CD8-positive, alpha-beta T cell (primary cell): ENCODE measurements at regions of chr2 and their contacts with region 1.

Region 1: DNA sequence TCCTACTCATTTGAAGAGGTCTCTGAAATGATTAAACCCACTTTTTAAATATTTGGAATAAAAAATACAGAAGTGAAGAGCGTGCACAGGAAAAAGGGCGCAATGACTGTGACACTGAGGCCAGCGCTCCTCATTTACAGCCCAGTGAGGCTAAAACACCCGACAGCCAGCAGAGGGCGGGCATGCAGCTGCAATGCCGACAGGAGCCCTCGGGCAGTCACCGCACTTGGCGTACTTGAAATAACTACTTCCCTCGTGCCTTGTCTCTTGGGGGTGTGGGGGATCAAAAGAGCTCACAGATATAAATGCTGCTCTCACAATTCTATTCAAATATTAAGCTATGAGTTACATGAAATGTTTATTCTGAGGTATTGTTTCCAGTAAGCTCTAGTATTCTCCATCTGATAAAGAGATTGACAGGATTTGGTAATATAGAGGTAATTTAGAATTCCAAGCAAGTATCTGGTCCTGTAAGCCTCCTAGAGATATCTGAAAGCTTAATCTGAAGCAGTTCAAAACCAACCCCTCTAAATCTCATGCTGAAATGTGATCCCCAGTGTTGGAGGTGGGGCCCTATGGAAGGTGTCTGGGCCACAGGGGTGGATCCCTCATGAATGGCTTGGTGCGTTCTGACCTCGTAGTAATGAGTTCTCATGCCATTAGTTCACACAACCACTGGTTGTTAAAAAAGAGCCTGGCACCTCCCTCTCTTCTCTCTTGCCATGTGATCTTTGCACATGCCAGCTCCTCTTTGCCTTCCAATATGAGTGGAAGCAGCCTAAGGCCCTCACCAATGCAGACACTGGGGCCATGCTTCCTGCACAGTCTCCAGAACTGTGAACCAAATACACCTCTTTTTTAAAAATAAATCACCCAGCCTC is 93.6 kb downstream of the ZAP70 start:
- DNase-seq: peak; percentile 56 to 84 (median 77)
- ATAC-seq: peak; percentile 95
- H3K4me3 ChIP-seq: no peak overlapping the region
- H3K4me3 Mint-ChIP-seq: no peak overlapping the region
- H3K27ac ChIP-seq: no peak overlapping the region
- H3K27ac Mint-ChIP-seq: no peak overlapping the region
- H3K4me1 ChIP-seq: no peaks in the 10 kb centered on the region
- H3K4me1 Mint-ChIP-seq: no peaks in the 10 kb centered on the region
- H3K27me3 ChIP-seq: no peaks in the 10 kb centered on the region
- H3K27me3 Mint-ChIP-seq: no peaks in the 10 kb centered on the region
- CTCF ChIP-seq: peak; percentile 95

Region 2: DNA sequence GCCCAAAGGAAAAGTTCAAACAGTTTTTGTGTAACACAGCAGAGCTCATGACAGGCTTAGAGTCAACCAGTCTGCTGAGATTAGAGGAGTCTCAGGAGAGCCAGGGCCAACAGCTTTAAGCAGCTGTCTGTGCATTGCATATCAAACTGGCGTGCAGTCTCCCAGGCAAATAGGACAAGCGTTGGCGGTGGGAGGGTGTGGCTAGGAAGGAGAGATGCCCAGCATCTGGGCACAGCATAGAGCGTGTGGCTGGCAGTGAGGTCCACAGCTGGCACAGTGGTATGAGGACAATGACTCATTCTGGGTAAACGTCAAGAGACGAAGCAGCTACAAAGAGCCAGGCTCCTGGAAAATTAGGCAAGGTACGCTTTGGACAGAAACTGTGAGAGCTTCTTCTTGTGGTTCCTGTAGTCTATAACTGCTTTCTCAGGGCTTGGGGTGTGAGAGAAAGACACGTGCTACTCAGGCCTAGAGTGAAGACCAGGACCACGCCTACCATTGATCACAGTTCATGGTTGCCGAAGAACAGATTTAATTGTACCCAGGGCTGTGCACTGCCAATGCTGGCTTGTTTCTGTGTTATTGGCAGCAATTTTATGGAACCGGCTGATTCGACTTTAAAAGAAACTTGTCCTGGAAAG is 78.8 kb before region 1 on chr2:
- CTCF ChIA-PET with region 1: no interaction called
- POLR2A ChIA-PET with region 1: no interaction called
- intact Hi-C with region 1: no loop called
- DNase-seq: peak in 5 of 9 experiments; percentile 38 to 63 (median 54)
- ATAC-seq: peak; percentile 76
- H3K4me3 ChIP-seq: no peak overlapping the region
- H3K4me3 Mint-ChIP-seq: no peak overlapping the region
- H3K27ac ChIP-seq: peak overlapping the region; percentile 13 to 32
- H3K27ac Mint-ChIP-seq: peak overlapping the region; percentile 90
- H3K4me1 ChIP-seq: peaks cover 66% of the 10 kb centered on the region
- H3K4me1 Mint-ChIP-seq: peaks cover 77% of the 10 kb centered on the region
- H3K27me3 ChIP-seq: no peaks in the 10 kb centered on the region
- H3K27me3 Mint-ChIP-seq: no peaks in the 10 kb centered on the region
- CTCF ChIP-seq: no peak

Region 3: DNA sequence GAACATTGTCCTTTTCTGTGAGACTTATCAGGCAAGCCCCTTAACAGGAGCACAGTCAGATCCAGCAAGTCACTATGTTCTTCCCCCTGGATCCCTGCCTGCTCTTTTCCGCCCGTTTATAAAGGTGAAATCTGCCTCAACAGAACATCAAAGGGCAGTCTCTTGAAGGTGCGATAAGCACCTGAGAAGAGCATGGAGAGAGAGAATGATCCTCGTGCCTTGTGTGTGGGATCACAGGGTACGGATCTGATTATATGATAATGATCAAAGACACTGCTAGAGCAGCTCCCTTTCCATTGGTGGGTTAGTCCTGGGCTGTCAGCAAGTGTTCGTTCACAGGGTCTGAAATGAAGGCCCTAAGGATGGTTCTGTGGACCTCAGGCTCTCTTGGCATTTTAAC is 12.8 kb after region 1 on chr2:
- CTCF ChIA-PET with region 1: interaction called, 23 read pairs
- POLR2A ChIA-PET with region 1: no interaction called
- intact Hi-C with region 1: no loop called
- DNase-seq: no peak
- ATAC-seq: no peak
- H3K4me3 ChIP-seq: no peak overlapping the region
- H3K4me3 Mint-ChIP-seq: no peak overlapping the region
- H3K27ac ChIP-seq: no peak overlapping the region
- H3K27ac Mint-ChIP-seq: no peak overlapping the region
- H3K4me1 ChIP-seq: no peaks in the 10 kb centered on the region
- H3K4me1 Mint-ChIP-seq: no peaks in the 10 kb centered on the region
- H3K27me3 ChIP-seq: no peaks in the 10 kb centered on the region
- H3K27me3 Mint-ChIP-seq: no peaks in the 10 kb centered on the region
- CTCF ChIP-seq: no peak

Region 4: DNA sequence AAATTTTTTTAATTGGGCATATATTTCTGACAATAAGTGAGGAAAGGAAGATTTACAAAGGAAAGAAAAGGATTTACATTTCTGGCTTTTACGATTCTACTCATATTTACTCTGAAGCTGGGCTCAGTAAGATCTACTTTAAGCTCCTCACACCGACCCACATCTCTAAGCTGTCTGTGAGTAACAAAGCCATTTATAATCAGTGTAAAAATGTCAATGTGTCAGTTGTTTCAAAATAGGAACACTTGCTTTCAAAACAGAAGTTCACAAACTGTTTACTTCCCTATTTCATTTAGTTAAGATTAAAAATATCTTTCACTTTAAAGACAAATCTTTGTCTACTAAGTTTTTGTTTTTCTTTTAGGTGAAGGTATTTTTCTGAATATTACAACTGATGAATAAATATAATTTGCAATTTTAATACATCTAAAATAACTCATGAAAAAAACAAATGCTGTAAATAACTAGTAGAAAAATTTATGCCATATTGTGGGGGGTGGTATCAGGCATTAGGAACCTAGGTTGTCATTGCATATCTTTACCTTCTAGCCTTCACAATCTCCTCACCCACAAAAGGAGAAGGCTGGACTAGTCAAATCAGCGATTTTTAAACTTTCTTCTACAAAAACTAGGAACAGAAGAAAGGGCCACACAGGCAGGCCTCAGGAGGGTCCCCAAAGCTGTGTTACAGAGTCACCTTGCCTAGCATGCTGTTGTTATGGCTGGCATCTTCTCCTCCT is 124.3 kb after region 1 on chr2:
- CTCF ChIA-PET with region 1: no interaction called
- POLR2A ChIA-PET with region 1: no interaction called
- intact Hi-C with region 1: no loop called
- DNase-seq: no peak
- ATAC-seq: no peak
- H3K4me3 ChIP-seq: no peak overlapping the region
- H3K4me3 Mint-ChIP-seq: no peak overlapping the region
- H3K27ac ChIP-seq: no peak overlapping the region
- H3K27ac Mint-ChIP-seq: no peak overlapping the region
- H3K4me1 ChIP-seq: peaks cover 12% of the 10 kb centered on the region
- H3K4me1 Mint-ChIP-seq: peaks cover 66% of the 10 kb centered on the region
- H3K27me3 ChIP-seq: no peaks in the 10 kb centered on the region
- H3K27me3 Mint-ChIP-seq: no peaks in the 10 kb centered on the region
- CTCF ChIP-seq: no peak

Region 5: DNA sequence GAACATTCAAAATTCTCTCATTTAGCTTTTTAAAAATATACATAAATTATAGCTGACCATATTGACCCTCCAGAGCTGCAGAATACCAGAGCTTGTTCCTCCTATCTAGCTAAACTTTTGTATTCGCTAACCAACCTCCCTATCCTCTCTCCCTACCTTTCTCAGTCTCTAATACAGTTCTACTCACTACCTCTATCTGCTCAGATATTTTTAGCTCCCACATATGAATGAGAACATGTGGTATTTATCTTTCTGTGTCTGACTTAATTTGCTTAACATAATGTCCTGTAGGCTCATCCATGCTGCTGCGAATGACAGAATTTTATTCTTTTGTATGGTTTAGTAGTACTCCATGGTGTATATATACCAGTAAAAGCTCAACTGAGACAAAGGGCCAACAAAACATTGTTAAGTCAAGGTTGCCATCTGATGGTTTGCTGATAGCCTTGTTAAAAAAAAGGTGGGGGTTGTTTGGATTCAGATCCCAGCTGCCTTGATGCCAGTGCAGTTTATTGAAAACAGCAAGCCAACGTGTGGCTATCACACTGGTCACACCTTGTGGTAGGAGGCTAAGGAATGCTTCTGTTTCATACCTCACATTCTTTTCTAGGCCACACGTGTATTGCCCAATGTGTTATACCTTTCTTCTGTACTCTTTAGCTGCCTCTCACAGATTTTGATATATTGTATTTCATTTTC is 381.5 kb after region 1 on chr2:
- CTCF ChIA-PET with region 1: interaction called, 4 read pairs
- POLR2A ChIA-PET with region 1: no interaction called
- intact Hi-C with region 1: loop called (anchors 1 to 5 kb)
- DNase-seq: peak in 1 of 9 experiments; percentile 18
- ATAC-seq: no peak
- H3K4me3 ChIP-seq: no peak overlapping the region
- H3K4me3 Mint-ChIP-seq: no peak overlapping the region
- H3K27ac ChIP-seq: no peak overlapping the region
- H3K27ac Mint-ChIP-seq: no peak overlapping the region
- H3K4me1 ChIP-seq: no peaks in the 10 kb centered on the region
- H3K4me1 Mint-ChIP-seq: no peaks in the 10 kb centered on the region
- H3K27me3 ChIP-seq: no peaks in the 10 kb centered on the region
- H3K27me3 Mint-ChIP-seq: peaks cover 2% of the 10 kb centered on the region
- CTCF ChIP-seq: no peak

Region 6: GRCh38 chr2:98212092-98212797 is 405.3 kb after region 1 on chr2:
- CTCF ChIA-PET with region 1: no interaction called
- POLR2A ChIA-PET with region 1: no interaction called
- intact Hi-C with region 1: no loop called
- DNase-seq: no peak
- ATAC-seq: no peak
- H3K4me3 ChIP-seq: no peak overlapping the region
- H3K4me3 Mint-ChIP-seq: no peak overlapping the region
- H3K27ac ChIP-seq: no peak overlapping the region
- H3K27ac Mint-ChIP-seq: no peak overlapping the region
- H3K4me1 ChIP-seq: no peaks in the 10 kb centered on the region
- H3K4me1 Mint-ChIP-seq: no peaks in the 10 kb centered on the region
- H3K27me3 ChIP-seq: no peaks in the 10 kb centered on the region
- H3K27me3 Mint-ChIP-seq: peaks cover 52% of the 10 kb centered on the region
- CTCF ChIP-seq: no peak

Region 7: DNA sequence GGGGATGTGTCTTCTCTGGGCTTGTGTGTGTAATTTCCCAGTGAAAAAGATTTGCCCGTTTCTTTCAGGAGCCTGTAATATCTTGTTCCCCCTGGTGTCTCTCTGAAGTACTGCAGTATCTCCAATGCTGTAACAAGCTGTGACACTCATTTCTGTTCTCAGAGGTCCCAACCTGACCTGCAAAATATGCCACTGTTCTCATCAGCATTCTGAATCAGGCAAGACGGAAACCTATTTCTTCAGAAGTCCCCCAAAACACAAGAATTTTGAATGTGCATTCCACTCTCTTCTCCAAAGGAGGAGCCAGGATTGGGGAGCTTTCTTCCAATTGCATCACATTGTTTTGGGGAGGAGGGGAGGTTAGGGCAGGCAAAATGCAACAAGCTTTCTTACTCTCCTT is 462.3 kb after region 1 on chr2:
- CTCF ChIA-PET with region 1: interaction called, 6 read pairs
- POLR2A ChIA-PET with region 1: no interaction called
- intact Hi-C with region 1: loop called in 1 of 2 experiments (anchors 2 kb)
- DNase-seq: peak in 2 of 9 experiments; percentile 23 to 38
- ATAC-seq: no peak
- H3K4me3 ChIP-seq: no peak overlapping the region
- H3K4me3 Mint-ChIP-seq: no peak overlapping the region
- H3K27ac ChIP-seq: no peak overlapping the region
- H3K27ac Mint-ChIP-seq: no peak overlapping the region
- H3K4me1 ChIP-seq: no peaks in the 10 kb centered on the region
- H3K4me1 Mint-ChIP-seq: no peaks in the 10 kb centered on the region
- H3K27me3 ChIP-seq: no peaks in the 10 kb centered on the region
- H3K27me3 Mint-ChIP-seq: peaks cover 9% of the 10 kb centered on the region
- CTCF ChIP-seq: no peak

Region 8: GRCh38 chr2:98378930-98379671 is 572.1 kb after region 1 on chr2:
- CTCF ChIA-PET with region 1: interaction called, 61 read pairs
- POLR2A ChIA-PET with region 1: no interaction called
- intact Hi-C with region 1: no loop called
- DNase-seq: peak in 1 of 9 experiments; percentile 17
- ATAC-seq: no peak
- H3K4me3 ChIP-seq: no peak overlapping the region
- H3K4me3 Mint-ChIP-seq: no peak overlapping the region
- H3K27ac ChIP-seq: no peak overlapping the region
- H3K27ac Mint-ChIP-seq: no peak overlapping the region
- H3K4me1 ChIP-seq: no peaks in the 10 kb centered on the region
- H3K4me1 Mint-ChIP-seq: no peaks in the 10 kb centered on the region
- H3K27me3 ChIP-seq: no peaks in the 10 kb centered on the region
- H3K27me3 Mint-ChIP-seq: peaks cover 13% of the 10 kb centered on the region
- CTCF ChIP-seq: no peak

Region 9: DNA sequence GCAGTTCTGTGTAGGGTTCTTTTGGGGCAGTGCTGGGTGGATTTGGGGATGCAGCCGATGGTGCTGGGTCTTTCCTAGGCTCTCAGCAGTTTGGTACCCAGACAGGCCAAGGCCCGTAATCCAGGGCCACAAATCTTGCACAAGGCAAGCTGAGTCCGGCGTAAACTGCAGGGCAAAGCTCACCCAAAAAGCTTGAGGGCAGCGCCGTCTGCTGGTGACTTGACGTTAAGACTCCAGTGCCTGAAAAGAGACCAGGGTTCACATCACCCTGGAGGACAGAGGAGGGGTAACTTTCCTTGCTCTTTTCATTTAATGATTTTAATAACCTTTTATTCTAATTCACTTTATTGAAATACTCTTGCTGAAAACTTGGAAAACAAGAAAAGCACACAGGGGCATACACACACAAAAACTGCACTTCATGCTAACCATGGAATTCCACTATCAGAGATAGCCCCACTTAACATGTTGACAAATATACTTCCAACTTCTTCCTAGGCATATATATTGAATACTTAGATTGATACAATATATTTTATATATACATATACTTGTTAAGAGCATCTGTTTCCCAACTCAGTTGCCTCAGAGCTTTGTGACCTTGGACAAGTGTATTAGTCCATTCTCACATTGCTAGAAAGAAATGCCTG is 578.2 kb after region 1 on chr2:
- CTCF ChIA-PET with region 1: interaction called, 61 read pairs
- POLR2A ChIA-PET with region 1: no interaction called
- intact Hi-C with region 1: loop called in 1 of 2 experiments (anchors 1 kb)
- DNase-seq: peak; percentile 50 to 78 (median 70)
- ATAC-seq: peak; percentile 78
- H3K4me3 ChIP-seq: no peak overlapping the region
- H3K4me3 Mint-ChIP-seq: no peak overlapping the region
- H3K27ac ChIP-seq: no peak overlapping the region
- H3K27ac Mint-ChIP-seq: no peak overlapping the region
- H3K4me1 ChIP-seq: no peaks in the 10 kb centered on the region
- H3K4me1 Mint-ChIP-seq: no peaks in the 10 kb centered on the region
- H3K27me3 ChIP-seq: no peaks in the 10 kb centered on the region
- H3K27me3 Mint-ChIP-seq: peaks cover 6% of the 10 kb centered on the region
- CTCF ChIP-seq: peak; percentile 88

Region 10: GRCh38 chr2:99127981-99128380 is 1321.0 kb after region 1 on chr2:
- CTCF ChIA-PET with region 1: no interaction called
- POLR2A ChIA-PET with region 1: no interaction called
- intact Hi-C with region 1: no loop called
- DNase-seq: no peak
- ATAC-seq: no peak
- H3K4me3 ChIP-seq: no peak overlapping the region
- H3K4me3 Mint-ChIP-seq: no peak overlapping the region
- H3K27ac ChIP-seq: no peak overlapping the region
- H3K27ac Mint-ChIP-seq: no peak overlapping the region
- H3K4me1 ChIP-seq: no peaks in the 10 kb centered on the region
- H3K4me1 Mint-ChIP-seq: no peaks in the 10 kb centered on the region
- H3K27me3 ChIP-seq: no peaks in the 10 kb centered on the region
- H3K27me3 Mint-ChIP-seq: no peaks in the 10 kb centered on the region
- CTCF ChIP-seq: no peak